Gastrocnemius medialis (tissue), 4 donors: ENCODE measurements at regions of chr22 and their contacts with region 1.

Region 1: DNA sequence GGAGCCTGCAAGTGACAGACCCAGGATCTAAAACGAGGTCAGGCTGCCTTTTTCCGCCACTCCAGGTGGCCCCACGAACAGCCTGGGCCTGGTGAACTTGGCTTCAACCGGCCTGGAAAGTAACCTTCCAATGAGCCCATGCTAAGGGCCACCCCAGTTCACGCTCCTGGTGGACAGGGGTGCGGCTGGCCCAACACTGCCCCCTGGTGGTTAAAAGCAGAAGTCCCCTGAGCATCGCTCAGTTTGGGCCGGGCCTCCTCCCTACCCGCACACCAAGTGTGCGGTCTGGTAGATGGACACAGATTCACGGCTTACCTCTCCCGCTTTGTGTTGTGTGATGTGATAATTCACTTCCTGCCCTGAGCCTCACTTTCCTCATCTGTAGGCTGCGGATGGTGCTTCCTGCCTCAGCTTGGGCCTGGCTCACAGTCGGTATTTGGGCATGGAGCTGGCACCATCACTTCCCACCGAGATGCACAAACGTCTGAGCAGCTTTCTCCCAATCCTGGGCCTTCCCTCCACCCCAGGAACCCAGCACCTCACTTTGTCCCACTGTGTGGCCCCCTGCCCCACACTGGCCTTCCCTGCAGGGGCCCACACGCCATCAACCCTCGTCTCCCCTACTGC is 13.7 kb upstream of the SEC14L3 start:
- DNase-seq: peak; percentile 9 to 44
- ATAC-seq: peak; percentile 58 to 73
- H3K4me3 ChIP-seq: no peak overlapping the region
- H3K27ac ChIP-seq: no peak overlapping the region
- H3K4me1 ChIP-seq: no peaks in the 10 kb centered on the region
- H3K27me3 ChIP-seq: peaks cover 0 to 2% (median 0%) of the 10 kb centered on the region in 3 donors
- CTCF ChIP-seq: peak; percentile 63 to 97 (median 89)
- POLR2A ChIP-seq: no peak

Region 2: GRCh38 chr22:30336752-30337460 is 148.6 kb before region 1 on chr22:
- in situ Hi-C with region 1: no loop called
- intact Hi-C with region 1: no loop called
- DNase-seq: peak; percentile 42 to 85
- ATAC-seq: peak; percentile 75 to 90
- H3K4me3 ChIP-seq: no peak overlapping the region
- H3K27ac ChIP-seq: peak overlapping the region; percentile 4 to 74 (median 36)
- H3K4me1 ChIP-seq: peaks cover 24 to 36% of the 10 kb centered on the region in 2 donors
- H3K27me3 ChIP-seq: no peaks in the 10 kb centered on the region
- CTCF ChIP-seq: no peak
- POLR2A ChIP-seq: no peak

Region 3: GRCh38 chr22:30444632-30445437 is 40.6 kb before region 1 on chr22:
- in situ Hi-C with region 1: no loop called
- intact Hi-C with region 1: loop called (anchors 5 kb)
- DNase-seq: no peak
- ATAC-seq: peak in 1 of 2 donors; percentile 33
- H3K4me3 ChIP-seq: no peak overlapping the region
- H3K27ac ChIP-seq: no peak overlapping the region
- H3K4me1 ChIP-seq: no peaks in the 10 kb centered on the region
- H3K27me3 ChIP-seq: peaks cover 0 to 3% (median 0%) of the 10 kb centered on the region in 3 donors
- CTCF ChIP-seq: peak; percentile 14 to 68 (median 53)
- POLR2A ChIP-seq: no peak